MCF 10A (cell line): ENCODE measurements at regions of chr12 and their contacts with region 1.

Region 1: DNA sequence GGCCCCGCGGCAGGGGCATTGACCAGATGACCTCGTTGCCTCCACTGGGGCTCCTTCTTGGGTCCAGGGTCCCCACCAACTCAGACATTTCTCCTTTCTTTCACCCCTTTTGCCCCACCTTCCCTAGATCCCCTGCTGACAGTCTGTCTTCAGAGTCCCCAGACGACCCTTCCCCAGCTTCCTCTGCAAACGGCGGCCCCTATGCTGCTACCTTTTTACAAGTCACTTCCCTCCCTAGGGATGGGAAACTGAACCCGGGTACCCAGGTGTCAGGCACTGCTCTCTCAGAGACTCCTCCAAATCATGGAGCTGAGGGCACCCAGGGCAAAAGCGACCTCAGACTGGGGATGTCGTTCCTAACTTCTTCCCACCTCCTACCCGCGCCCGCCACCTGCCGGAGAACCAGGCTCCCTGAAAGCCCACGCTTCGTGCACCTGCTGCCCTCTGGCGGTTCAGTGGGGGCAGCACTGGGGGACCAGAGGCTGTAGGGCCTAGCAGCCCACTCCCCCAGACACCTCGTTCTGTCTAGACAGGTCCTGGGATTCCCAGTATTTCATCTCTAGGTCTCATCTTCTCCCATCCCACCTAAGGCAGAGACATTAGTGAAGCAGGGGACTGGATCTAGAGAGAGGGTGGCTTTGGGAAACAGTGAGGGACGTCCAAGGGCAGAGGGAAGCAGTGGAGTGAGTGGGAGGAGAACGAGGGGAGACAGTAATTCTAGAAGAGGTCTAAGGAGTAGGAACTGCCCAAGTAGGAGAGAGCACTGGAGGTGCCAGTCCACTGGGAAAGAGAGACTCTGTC is 4.9 kb downstream of the ZNF385A start:
- DNase-seq: peak; percentile 92
- H3K4me3 Mint-ChIP-seq: peak overlapping the region; percentile 74
- H3K27ac Mint-ChIP-seq: peak overlapping the region; percentile 49
- H3K4me1 Mint-ChIP-seq: peaks cover 37% of the 10 kb centered on the region
- H3K27me3 Mint-ChIP-seq: no peaks in the 10 kb centered on the region
- CTCF ChIP-seq: peak; percentile 99

Region 2: DNA sequence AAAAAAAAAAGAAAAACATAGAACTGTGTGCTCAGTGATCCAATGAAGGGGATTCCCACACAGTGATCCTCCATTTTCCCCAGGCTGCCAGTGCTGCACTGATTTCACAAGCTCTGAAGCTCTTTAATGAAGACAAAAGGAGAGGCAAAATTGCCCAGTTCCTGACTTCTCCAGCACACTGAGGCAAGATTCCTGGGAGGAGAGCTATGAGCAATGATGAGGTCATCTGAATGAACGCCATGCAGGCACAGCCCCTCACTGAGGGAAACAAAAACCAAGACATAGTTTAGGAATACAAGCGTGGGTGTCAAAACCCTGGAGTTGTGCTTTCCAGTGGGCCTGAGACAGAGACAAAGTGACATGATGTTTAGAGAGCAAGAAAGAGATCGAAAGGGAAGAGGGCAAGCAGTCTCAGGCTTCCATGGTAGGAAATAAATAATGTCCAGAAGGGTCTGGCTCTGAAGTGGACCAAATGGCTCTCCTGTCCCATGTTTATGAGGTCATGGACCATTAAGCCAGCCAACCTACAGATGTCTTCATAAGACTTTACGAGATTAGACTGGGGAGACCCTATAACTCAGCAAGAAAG is 149.9 kb before region 1 on chr12:
- CTCF ChIA-PET with region 1: interaction called, 11 read pairs
- POLR2A ChIA-PET with region 1: no interaction called
- intact Hi-C with region 1: no loop called
- DNase-seq: peak; percentile 96
- H3K4me3 Mint-ChIP-seq: peak overlapping the region; percentile 0
- H3K27ac Mint-ChIP-seq: peak overlapping the region; percentile 83
- H3K4me1 Mint-ChIP-seq: peaks cover 17% of the 10 kb centered on the region
- H3K27me3 Mint-ChIP-seq: no peaks in the 10 kb centered on the region
- CTCF ChIP-seq: no peak

Region 3: GRCh38 chr12:54337280-54337842 is 42.2 kb before region 1 on chr12:
- CTCF ChIA-PET with region 1: interaction called, 46 read pairs
- POLR2A ChIA-PET with region 1: interaction called, 3 read pairs
- intact Hi-C with region 1: no loop called
- DNase-seq: no peak
- H3K4me3 Mint-ChIP-seq: no peak overlapping the region
- H3K27ac Mint-ChIP-seq: no peak overlapping the region
- H3K4me1 Mint-ChIP-seq: peaks cover 13% of the 10 kb centered on the region
- H3K27me3 Mint-ChIP-seq: no peaks in the 10 kb centered on the region
- CTCF ChIP-seq: no peak

Region 4: GRCh38 chr12:54398995-54399793 is 19.6 kb after region 1 on chr12:
- CTCF ChIA-PET with region 1: interaction called, 120 read pairs
- POLR2A ChIA-PET with region 1: no interaction called
- intact Hi-C with region 1: loop called (anchors 1 kb)
- DNase-seq: peak; percentile 88
- H3K4me3 Mint-ChIP-seq: no peak overlapping the region
- H3K27ac Mint-ChIP-seq: no peak overlapping the region
- H3K4me1 Mint-ChIP-seq: peaks cover 13% of the 10 kb centered on the region
- H3K27me3 Mint-ChIP-seq: no peaks in the 10 kb centered on the region
- CTCF ChIP-seq: peak; percentile 91

Region 5: DNA sequence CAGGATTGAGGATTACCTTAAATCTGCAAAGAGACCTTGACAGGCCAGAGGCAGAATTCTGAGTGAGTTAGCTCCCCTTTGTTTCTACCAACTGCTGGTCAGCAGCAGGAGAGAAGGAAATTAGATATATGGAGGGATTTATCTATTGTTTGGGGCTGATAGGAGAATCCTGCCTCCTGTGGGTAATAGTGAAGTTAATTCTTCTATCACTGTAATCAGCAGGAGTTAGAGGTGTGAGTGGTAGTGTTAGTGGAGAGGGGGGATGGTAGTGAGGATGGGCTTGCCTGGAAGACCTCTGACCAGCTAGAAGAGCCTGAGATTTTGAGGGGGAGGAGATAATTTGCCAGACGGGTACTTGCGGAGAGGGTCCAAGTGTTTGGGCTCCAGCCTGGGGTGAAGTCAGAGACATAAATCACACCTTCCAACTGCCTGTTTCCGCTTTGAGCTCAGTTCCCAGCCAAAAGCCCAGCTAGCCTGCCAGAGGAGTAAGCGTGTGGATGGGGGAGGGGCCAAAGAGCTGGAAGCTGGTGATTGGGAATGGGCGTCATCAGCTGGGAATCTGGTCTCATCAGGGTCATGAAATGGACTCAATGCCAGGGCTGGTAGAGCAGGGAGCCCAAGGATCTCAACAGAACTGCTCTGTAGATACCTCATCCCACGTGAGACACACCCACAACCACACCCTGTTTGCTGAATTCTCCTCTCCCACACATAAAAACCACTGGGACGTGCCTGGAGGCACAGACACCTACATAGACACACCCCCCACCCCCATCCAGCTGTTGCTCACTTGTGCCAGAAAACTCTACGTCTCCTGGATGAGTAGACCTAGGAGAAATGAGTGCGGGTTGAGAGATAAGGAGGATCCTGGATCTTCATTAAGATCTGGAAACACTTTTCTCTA is 52.6 kb after region 1 on chr12:
- CTCF ChIA-PET with region 1: interaction called, 22 read pairs
- POLR2A ChIA-PET with region 1: interaction called, 3 read pairs
- intact Hi-C with region 1: no loop called
- DNase-seq: peak; percentile 97
- H3K4me3 Mint-ChIP-seq: peak overlapping the region; percentile 56
- H3K27ac Mint-ChIP-seq: peak overlapping the region; percentile 83
- H3K4me1 Mint-ChIP-seq: peaks cover 55% of the 10 kb centered on the region
- H3K27me3 Mint-ChIP-seq: no peaks in the 10 kb centered on the region
- CTCF ChIP-seq: no peak